ENCODE measurements at regions of chr6 and their contacts with region 1.

Region 1: DNA sequence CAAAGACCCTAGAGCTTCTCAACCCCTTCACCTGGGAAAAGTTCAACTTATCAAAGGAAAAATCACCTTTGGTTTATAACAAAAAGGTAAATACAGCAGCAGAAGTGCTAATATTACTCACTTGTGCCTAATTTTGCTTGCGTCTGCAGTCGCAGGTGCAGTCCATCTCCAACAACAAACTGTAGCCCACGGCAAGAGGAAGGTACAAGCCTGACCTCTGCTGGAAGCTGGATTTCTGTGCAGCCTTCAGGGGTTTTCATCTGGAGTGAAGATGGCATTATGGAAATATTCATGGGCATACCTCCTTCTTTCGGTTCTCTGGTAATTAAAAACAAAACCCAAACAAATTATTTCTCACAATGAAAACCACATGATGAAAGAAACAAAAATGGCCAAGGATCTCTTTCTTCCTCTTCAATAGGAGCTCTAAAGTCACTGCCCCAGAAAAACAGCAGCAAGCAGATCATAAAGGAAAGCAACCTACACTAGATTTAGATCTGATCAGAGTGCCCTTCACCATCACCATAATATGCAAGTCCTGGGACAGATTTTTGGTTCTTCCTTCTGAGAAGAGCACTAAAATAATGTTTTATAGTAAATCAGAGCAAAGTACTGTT is 7.8 kb downstream of the UBE3D start:
- DNase-seq: no peak
- H3K4me3 ChIP-seq: no peak overlapping the region
- H3K27me3 ChIP-seq: no peaks in the 10 kb centered on the region
- CTCF ChIP-seq: peak; percentile 91

Region 2: DNA sequence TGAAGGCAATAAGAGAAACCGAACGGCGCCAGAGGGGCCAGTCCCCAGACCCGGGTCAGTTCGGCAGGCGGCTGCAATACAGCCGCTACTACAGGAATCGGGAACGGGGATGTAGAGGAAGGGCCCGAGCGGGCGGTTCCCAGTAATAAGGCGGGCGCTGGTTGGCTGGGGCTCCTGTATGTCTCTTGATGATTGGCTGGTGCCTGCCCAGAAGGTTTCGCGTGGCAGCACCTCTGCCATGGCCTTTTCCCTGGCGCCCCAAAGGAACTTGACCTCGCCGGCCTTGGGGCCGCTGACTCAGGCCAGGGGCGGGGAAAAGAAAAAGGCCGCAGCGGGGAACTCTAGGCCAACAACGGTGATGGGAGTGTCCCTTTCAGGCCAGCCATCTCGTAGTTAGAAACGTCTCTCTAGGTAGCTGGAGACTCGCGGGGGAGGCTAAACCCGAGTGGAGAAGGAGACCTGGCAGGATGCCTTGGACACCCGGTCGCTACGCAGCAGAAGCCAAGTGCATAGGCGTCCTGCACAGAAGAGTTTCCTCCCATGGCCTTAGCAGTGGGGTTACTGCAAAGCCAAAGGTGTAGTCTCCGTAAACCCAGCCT is 810.1 kb before region 1 on chr6 and contains the start of gene IBTK:
- CTCF ChIA-PET with region 1: interaction called, 38 read pairs
- POLR2A ChIA-PET with region 1: no interaction called
- DNase-seq: peak; percentile 58
- H3K4me3 ChIP-seq: peak within 1 kb of the TSS; percentile 61
- H3K27me3 ChIP-seq: no peaks in the 10 kb centered on the region
- CTCF ChIP-seq: no peak
- polyA plus RNA-seq, gene IBTK: 13.0 and 29.8 TPM in 2 replicates

Region 3: DNA sequence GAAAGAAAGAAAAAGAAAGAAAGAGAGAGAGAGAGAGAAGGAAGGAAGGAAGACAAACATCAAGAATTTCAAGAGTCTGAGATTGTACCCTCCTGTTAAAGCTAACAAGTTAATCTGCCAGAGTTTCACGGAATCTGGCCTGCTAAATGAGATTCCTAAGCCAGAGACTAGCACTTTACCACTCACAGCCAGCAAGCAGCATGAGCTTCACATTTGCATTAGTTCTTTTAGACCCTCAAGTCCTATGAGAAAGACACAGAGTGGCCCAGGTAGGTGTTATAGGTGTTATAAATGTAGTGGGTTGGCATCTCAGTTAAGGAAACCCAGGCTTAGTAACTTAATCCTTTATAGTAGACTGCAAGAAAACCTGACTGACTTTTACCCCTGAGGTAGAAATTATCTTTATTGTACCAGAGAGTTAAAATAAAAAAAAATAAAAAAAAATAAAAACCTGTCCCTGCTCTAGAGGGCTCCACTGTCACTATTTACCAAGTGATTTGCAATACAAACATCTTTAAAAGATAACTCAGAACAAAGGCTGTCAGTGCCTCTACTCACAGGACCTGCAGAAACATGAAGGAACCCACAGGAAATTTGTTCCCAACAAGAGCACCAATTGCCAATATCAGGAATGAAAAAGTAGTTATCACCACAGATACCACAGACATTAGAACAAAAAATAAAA is 800.6 kb before region 1 on chr6:
- CTCF ChIA-PET with region 1: interaction called, 38 read pairs
- POLR2A ChIA-PET with region 1: no interaction called
- DNase-seq: no peak
- H3K4me3 ChIP-seq: no peak overlapping the region
- H3K27me3 ChIP-seq: no peaks in the 10 kb centered on the region
- CTCF ChIP-seq: no peak

Region 4: GRCh38 chr6:82270881-82271645 is 786.8 kb before region 1 on chr6:
- CTCF ChIA-PET with region 1: interaction called, 114 read pairs
- POLR2A ChIA-PET with region 1: no interaction called
- DNase-seq: no peak
- H3K4me3 ChIP-seq: no peak overlapping the region
- H3K27me3 ChIP-seq: no peaks in the 10 kb centered on the region
- CTCF ChIP-seq: peak; percentile 52

Region 5: GRCh38 chr6:82331031-82331773 is 726.6 kb before region 1 on chr6:
- CTCF ChIA-PET with region 1: interaction called, 4 read pairs
- POLR2A ChIA-PET with region 1: interaction called, 10 read pairs
- DNase-seq: peak; percentile 49
- H3K4me3 ChIP-seq: no peak overlapping the region
- H3K27me3 ChIP-seq: no peaks in the 10 kb centered on the region
- CTCF ChIP-seq: peak; percentile 49

Region 6: GRCh38 chr6:82875573-82876185 is 182.1 kb before region 1 on chr6:
- CTCF ChIA-PET with region 1: no interaction called
- POLR2A ChIA-PET with region 1: no interaction called
- DNase-seq: peak; percentile 31
- H3K4me3 ChIP-seq: no peak overlapping the region
- H3K27me3 ChIP-seq: no peaks in the 10 kb centered on the region; the same call in 1 of the 2 replicates
- CTCF ChIP-seq: no peak

Region 7: GRCh38 chr6:83083476-83083875 is 25.7 kb after region 1 on chr6:
- CTCF ChIA-PET with region 1: no interaction called
- POLR2A ChIA-PET with region 1: no interaction called
- DNase-seq: no peak
- H3K4me3 ChIP-seq: no peak overlapping the region
- H3K27me3 ChIP-seq: no peaks in the 10 kb centered on the region
- CTCF ChIP-seq: no peak

Measured in BJ (cell line).